ENCODE measurements at regions of chr3 and their contacts with region 1.

Region 1: GRCh38 chr3:191417457-191417729 is 43.6 kb upstream of the PYDC2 start:
- DNase-seq: no peak
- ATAC-seq: no peak
- H3K4me3 Mint-ChIP-seq: no peak overlapping the region
- H3K27ac Mint-ChIP-seq: no peak overlapping the region
- H3K4me1 Mint-ChIP-seq: peaks cover 7% of the 10 kb centered on the region
- H3K27me3 Mint-ChIP-seq: no peaks in the 10 kb centered on the region
- CTCF ChIP-seq: no peak

Region 2: GRCh38 chr3:191356611-191357439 is 60.6 kb before region 1 on chr3:
- CTCF ChIA-PET with region 1: no interaction called
- POLR2A ChIA-PET with region 1: no interaction called
- intact Hi-C with region 1: no loop called
- DNase-seq: no peak
- ATAC-seq: no peak
- H3K4me3 Mint-ChIP-seq: no peak overlapping the region
- H3K27ac Mint-ChIP-seq: peak overlapping the region; percentile 84
- H3K4me1 Mint-ChIP-seq: peaks cover 57% of the 10 kb centered on the region
- H3K27me3 Mint-ChIP-seq: no peaks in the 10 kb centered on the region
- CTCF ChIP-seq: no peak

Region 3: GRCh38 chr3:191470545-191470944 is 53.2 kb after region 1 on chr3:
- CTCF ChIA-PET with region 1: no interaction called
- POLR2A ChIA-PET with region 1: no interaction called
- intact Hi-C with region 1: no loop called
- DNase-seq: no peak
- ATAC-seq: no peak
- H3K4me3 Mint-ChIP-seq: no peak overlapping the region
- H3K27ac Mint-ChIP-seq: no peak overlapping the region
- H3K4me1 Mint-ChIP-seq: no peaks in the 10 kb centered on the region
- H3K27me3 Mint-ChIP-seq: peaks cover 16% of the 10 kb centered on the region
- CTCF ChIP-seq: no peak

Region 4: DNA sequence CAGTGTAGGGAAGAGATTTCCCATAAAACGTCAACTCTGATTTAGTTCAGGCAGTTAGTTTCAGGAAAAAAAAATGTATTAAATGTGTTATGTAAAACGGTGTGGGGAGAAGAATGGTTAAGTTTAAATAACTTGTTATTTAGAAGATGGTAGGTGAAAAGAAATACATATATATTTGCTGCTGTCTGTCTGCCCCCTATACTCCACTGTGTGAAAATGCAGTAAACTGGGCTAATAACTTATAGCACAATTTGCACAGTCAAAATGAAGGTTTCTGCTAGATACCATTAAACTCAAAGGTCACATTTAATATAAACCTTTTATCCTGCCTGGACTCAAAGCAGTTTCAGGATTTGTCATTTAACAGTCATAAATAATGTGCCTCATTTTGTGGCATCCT is 794.9 kb after region 1 on chr3:
- CTCF ChIA-PET with region 1: no interaction called
- POLR2A ChIA-PET with region 1: no interaction called
- intact Hi-C with region 1: loop called (anchors 1 kb)
- DNase-seq: no peak
- ATAC-seq: no peak
- H3K4me3 Mint-ChIP-seq: no peak overlapping the region
- H3K27ac Mint-ChIP-seq: no peak overlapping the region
- H3K4me1 Mint-ChIP-seq: no peaks in the 10 kb centered on the region
- H3K27me3 Mint-ChIP-seq: peaks cover 5% of the 10 kb centered on the region
- CTCF ChIP-seq: no peak

Region 5: DNA sequence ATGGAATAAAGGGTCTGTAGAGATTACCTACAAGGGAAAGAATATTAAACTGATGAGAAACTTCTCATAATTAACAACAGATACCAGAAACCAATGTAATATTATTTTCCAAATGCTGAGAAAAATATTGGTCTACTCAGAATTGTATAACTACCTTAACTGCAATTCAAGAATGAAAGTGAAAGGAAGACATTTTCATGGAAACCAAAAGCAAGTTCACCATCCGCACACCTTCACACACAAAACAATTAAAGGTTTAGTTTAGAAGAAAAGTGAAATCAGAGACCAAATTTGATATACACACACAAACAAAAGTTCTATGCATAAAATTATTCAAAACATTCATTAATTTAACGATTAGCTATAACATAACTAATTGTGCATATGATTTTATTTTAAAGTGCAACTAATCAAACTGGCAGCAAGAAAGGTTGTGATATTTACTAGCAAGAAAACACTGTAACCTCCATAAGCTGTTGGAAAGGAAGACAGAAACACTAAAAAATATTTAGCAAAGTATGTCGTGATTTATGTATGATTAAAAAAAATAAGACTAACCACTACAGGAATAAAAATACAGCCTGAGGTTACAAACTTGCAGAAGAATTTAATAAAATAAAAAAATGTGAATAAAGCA is 914.5 kb after region 1 on chr3:
- CTCF ChIA-PET with region 1: no interaction called
- POLR2A ChIA-PET with region 1: no interaction called
- intact Hi-C with region 1: loop called (anchors 2 kb)
- DNase-seq: no peak
- ATAC-seq: no peak
- H3K4me3 Mint-ChIP-seq: peak overlapping the region; percentile 3
- H3K27ac Mint-ChIP-seq: no peak overlapping the region
- H3K4me1 Mint-ChIP-seq: peaks cover 5% of the 10 kb centered on the region
- H3K27me3 Mint-ChIP-seq: no peaks in the 10 kb centered on the region
- CTCF ChIP-seq: no peak

Region 6: GRCh38 chr3:192423003-192423349 is 1005.6 kb after region 1 on chr3:
- CTCF ChIA-PET with region 1: no interaction called
- POLR2A ChIA-PET with region 1: no interaction called
- intact Hi-C with region 1: loop called (anchors 1 kb)
- DNase-seq: no peak
- ATAC-seq: no peak
- H3K4me3 Mint-ChIP-seq: no peak overlapping the region
- H3K27ac Mint-ChIP-seq: no peak overlapping the region
- H3K4me1 Mint-ChIP-seq: no peaks in the 10 kb centered on the region
- H3K27me3 Mint-ChIP-seq: peaks cover 10% of the 10 kb centered on the region
- CTCF ChIP-seq: no peak